Activated B cell treated with CpG ODN at 0.5 μM for 24 hours (primary cell): ENCODE measurements at regions of chr9 and their contacts with region 1.

Region 1: GRCh38 chr9:95875305-95876137 is at the start of gene ERCC6L2:
- DNase-seq: peak; percentile 89
- ATAC-seq: peak; percentile 88
- H3K4me3 Mint-ChIP-seq: no peak within 1 kb of the TSS
- H3K27ac Mint-ChIP-seq: no peak within 1 kb of the TSS
- H3K4me1 Mint-ChIP-seq: peaks cover 20% of the 10 kb centered on the region
- H3K27me3 Mint-ChIP-seq: no peaks in the 10 kb centered on the region
- CTCF ChIP-seq: no peak
- total RNA-seq, gene ERCC6L2: 43.2 and 52.3 TPM in 2 replicates

Region 2: GRCh38 chr9:94166237-94166963 is 1709.1 kb before region 1 on chr9:
- CTCF ChIA-PET with region 1: no interaction called
- POLR2A ChIA-PET with region 1: no interaction called
- intact Hi-C with region 1: loop called (anchors 5 kb)
- DNase-seq: peak; percentile 85
- ATAC-seq: peak; percentile 63
- H3K4me3 Mint-ChIP-seq: peak overlapping the region; percentile 89
- H3K27ac Mint-ChIP-seq: peak overlapping the region; percentile 87
- H3K4me1 Mint-ChIP-seq: peaks cover 49% of the 10 kb centered on the region
- H3K27me3 Mint-ChIP-seq: no peaks in the 10 kb centered on the region
- CTCF ChIP-seq: no peak

Region 3: DNA sequence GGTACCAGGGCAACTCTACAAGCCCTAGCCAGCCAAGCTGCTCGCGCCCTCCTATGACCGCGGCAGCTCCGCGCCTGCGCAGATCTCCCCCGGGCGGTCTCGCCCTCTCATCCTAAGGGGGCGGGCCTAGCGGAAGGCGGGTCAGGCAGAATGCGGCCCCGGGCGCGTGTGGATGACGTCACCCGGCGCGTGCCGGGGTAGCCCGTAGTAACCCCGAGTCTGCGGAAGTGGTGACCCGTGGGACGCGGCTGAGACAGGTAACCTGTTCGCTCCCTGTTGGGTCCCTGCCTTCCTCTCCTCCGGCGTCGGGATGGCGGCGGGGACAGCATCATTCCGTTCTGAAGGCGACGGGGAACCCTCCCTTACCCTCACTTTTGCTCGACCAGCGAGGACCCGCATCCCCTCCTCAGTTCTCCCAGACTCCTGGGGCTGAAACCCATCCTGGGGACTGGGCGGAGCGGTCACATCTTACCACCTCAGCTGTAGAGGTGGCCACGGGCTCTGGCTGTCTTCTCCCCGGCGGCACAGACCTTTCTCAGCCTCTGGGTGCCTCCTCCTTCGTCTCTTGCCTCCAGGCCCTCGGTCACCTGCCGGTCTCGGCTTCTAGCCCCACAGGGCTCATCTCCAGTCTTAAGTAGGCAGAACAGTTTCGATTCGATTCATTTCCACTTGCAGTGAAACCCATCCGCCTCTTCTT is 1148.9 kb before region 1 on chr9 and contains the start of gene AOPEP:
- CTCF ChIA-PET with region 1: no interaction called
- POLR2A ChIA-PET with region 1: no interaction called
- intact Hi-C with region 1: loop called (anchors 1 kb)
- DNase-seq: peak; percentile 99
- ATAC-seq: peak; percentile 96
- H3K4me3 Mint-ChIP-seq: peak within 1 kb of the TSS; percentile 98
- H3K27ac Mint-ChIP-seq: peak within 1 kb of the TSS; percentile 96
- H3K4me1 Mint-ChIP-seq: peaks cover 8% of the 10 kb centered on the region
- H3K27me3 Mint-ChIP-seq: peaks cover 2% of the 10 kb centered on the region
- CTCF ChIP-seq: no peak
- total RNA-seq, gene AOPEP: 16.8 and 20.4 TPM in 2 replicates

Region 4: GRCh38 chr9:95510709-95511615 is 364.6 kb before region 1 on chr9:
- CTCF ChIA-PET with region 1: no interaction called
- POLR2A ChIA-PET with region 1: interaction called, 8 read pairs
- intact Hi-C with region 1: loop called (anchors 5 kb)
- DNase-seq: peak; percentile 64
- ATAC-seq: peak; percentile 38
- H3K4me3 Mint-ChIP-seq: peak overlapping the region; percentile 92
- H3K27ac Mint-ChIP-seq: peak overlapping the region; percentile 70
- H3K4me1 Mint-ChIP-seq: peaks cover 47% of the 10 kb centered on the region
- H3K27me3 Mint-ChIP-seq: peaks cover 40% of the 10 kb centered on the region
- CTCF ChIP-seq: no peak

Region 5: GRCh38 chr9:95822583-95823431 is 52.7 kb before region 1 on chr9:
- CTCF ChIA-PET with region 1: no interaction called
- POLR2A ChIA-PET with region 1: interaction called, 19 read pairs
- intact Hi-C with region 1: loop called (anchors 1 kb)
- DNase-seq: no peak
- ATAC-seq: peak; percentile 69
- H3K4me3 Mint-ChIP-seq: peak overlapping the region; percentile 9
- H3K27ac Mint-ChIP-seq: peak overlapping the region; percentile 65
- H3K4me1 Mint-ChIP-seq: peaks cover 15% of the 10 kb centered on the region
- H3K27me3 Mint-ChIP-seq: no peaks in the 10 kb centered on the region
- CTCF ChIP-seq: no peak

Region 6: DNA sequence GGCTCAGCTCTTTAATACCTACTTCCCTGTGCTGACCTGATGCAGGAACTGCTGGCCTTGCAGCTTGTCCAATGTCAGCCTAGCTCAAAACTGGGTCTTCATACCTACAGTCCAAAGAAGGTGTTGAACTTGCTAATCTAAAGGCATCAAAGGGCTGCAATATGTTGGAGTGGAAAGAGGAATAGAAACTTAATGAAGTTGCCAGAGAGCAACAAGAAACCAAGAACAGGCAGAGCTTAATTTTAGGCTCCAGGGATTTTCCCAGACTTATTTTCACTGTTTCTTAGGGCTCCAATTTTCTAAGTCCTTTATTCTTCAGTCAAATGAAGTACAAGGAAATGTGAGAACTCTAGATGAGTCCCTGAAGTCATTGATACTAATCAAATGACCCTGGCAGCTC is 17.6 kb before region 1 on chr9:
- CTCF ChIA-PET with region 1: no interaction called
- POLR2A ChIA-PET with region 1: interaction called, 30 read pairs
- intact Hi-C with region 1: loop called (anchors 1 kb)
- DNase-seq: no peak
- ATAC-seq: peak; percentile 72
- H3K4me3 Mint-ChIP-seq: peak overlapping the region; percentile 51
- H3K27ac Mint-ChIP-seq: peak overlapping the region; percentile 77
- H3K4me1 Mint-ChIP-seq: peaks cover 39% of the 10 kb centered on the region
- H3K27me3 Mint-ChIP-seq: no peaks in the 10 kb centered on the region
- CTCF ChIP-seq: no peak

Region 7: GRCh38 chr9:95910023-95910707 is 34.6 kb after region 1 on chr9:
- CTCF ChIA-PET with region 1: no interaction called
- POLR2A ChIA-PET with region 1: no interaction called
- intact Hi-C with region 1: no loop called
- DNase-seq: no peak
- ATAC-seq: no peak
- H3K4me3 Mint-ChIP-seq: no peak overlapping the region
- H3K27ac Mint-ChIP-seq: no peak overlapping the region
- H3K4me1 Mint-ChIP-seq: no peaks in the 10 kb centered on the region
- H3K27me3 Mint-ChIP-seq: no peaks in the 10 kb centered on the region
- CTCF ChIP-seq: no peak